Ovary (tissue), 10 donors: ENCODE measurements at regions of chr16 and their contacts with region 1.

Region 1: DNA sequence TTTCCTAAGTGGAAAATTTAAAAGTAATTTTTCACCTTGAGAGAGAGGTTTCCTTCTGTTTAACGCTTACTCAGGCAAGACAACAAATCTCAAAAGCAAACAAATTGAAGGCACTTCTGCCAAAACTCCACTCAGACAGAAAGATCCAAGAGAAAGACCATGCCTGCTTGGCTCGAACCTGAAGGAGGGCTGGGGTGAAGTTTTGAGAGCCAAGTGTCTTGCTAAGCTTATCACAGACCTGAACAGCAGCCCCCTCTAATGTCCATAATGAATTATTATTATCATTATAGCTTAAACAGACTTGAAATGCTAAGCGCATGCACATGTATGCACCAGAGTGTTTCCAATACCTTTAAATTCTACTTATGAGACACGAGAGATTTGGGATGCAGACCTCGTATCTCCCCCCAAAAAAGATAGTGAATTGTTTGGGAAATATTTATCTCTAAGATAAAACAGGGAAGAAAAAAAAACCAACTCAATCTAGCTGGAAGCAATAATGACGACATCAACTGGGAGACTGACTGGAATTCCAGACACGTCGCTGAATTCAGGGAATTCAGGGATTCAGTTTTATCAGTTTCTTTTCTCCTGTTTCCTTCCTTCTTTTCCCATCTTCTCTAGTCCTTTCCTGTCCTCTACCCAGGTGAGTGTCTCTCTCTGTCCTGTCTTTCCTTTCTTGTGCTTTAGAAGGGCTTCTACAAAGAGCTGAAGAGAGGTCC is 473.2 kb downstream of the RBFOX1 start:
- DNase-seq: no peak
- H3K4me3 ChIP-seq: no peak overlapping the region
- H3K27ac ChIP-seq: no peak overlapping the region
- H3K4me1 ChIP-seq: no peaks in the 10 kb centered on the region
- H3K27me3 ChIP-seq: no peaks in the 10 kb centered on the region
- CTCF ChIP-seq: no peak
- EP300 ChIP-seq: no peak
- POLR2A ChIP-seq: no peak

Region 2: GRCh38 chr16:7755347-7755882 is 50.4 kb before region 1 on chr16:
- intact Hi-C with region 1: loop called in 1 of 4 experiments (anchors 10 kb)
- DNase-seq: no peak
- H3K4me3 ChIP-seq: no peak overlapping the region
- H3K27ac ChIP-seq: no peak overlapping the region
- H3K4me1 ChIP-seq: no peaks in the 10 kb centered on the region
- H3K27me3 ChIP-seq: no peaks in the 10 kb centered on the region
- CTCF ChIP-seq: no peak
- EP300 ChIP-seq: no peak
- POLR2A ChIP-seq: no peak

Region 3: GRCh38 chr16:7867831-7868230 is 62.0 kb after region 1 on chr16:
- intact Hi-C with region 1: no loop called
- DNase-seq: no peak
- H3K4me3 ChIP-seq: no peak overlapping the region
- H3K27ac ChIP-seq: no peak overlapping the region
- H3K4me1 ChIP-seq: no peaks in the 10 kb centered on the region
- H3K27me3 ChIP-seq: no peaks in the 10 kb centered on the region
- CTCF ChIP-seq: no peak
- EP300 ChIP-seq: no peak
- POLR2A ChIP-seq: no peak